A549 (cell line): ENCODE measurements at regions of chr2 and their contacts with region 1.

Region 1: DNA sequence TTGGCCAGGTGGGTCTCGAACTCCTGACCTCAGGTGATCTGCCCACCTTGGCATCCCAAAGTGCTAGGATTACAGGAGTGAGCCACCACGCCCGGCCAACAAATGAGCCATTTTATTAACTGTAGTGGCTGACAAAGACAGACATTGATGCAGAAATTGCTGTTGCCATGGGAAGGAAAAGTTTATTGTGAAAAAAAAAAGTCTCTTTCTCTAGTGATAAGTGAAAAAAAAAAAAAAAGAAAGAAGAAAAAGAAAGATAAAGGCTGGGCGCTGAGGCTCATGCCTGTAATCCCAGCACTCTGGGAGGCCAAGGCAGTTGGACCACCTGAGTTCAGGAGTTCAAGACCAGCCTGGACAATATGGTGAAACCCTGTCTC is 39.8 kb upstream of the RAB1A start:
- DNase-seq: no peak
- ATAC-seq: no peak
- H3K4me3 ChIP-seq: no peak overlapping the region
- H3K27ac ChIP-seq: no peak overlapping the region; a peak in 2 of 6 replicates
- H3K4me1 ChIP-seq: peaks cover 15% of the 10 kb centered on the region; the same call in 2 of the 3 replicates
- CTCF ChIP-seq: no peak
- EP300 ChIP-seq: no peak
- POLR2A ChIP-seq: no peak
- RAD21 ChIP-seq: no peak

Region 2: GRCh38 chr2:65075605-65076344 is 94.0 kb before region 1 on chr2:
- CTCF ChIA-PET with region 1: interaction called, 11 read pairs
- POLR2A ChIA-PET with region 1: no interaction called
- DNase-seq: no peak
- ATAC-seq: peak; percentile 31 to 49; a peak in 4 of 6 replicates
- H3K4me3 ChIP-seq: no peak overlapping the region
- H3K27ac ChIP-seq: no peak overlapping the region
- H3K4me1 ChIP-seq: peaks cover 19% of the 10 kb centered on the region
- CTCF ChIP-seq: no peak
- EP300 ChIP-seq: no peak
- POLR2A ChIP-seq: no peak; the same call in 1 of the 2 replicates
- RAD21 ChIP-seq: no peak

Region 3: GRCh38 chr2:65158557-65158956 is 11.2 kb before region 1 on chr2:
- CTCF ChIA-PET with region 1: interaction called, 10 read pairs
- POLR2A ChIA-PET with region 1: no interaction called
- DNase-seq: no peak
- ATAC-seq: no peak
- H3K4me3 ChIP-seq: no peak overlapping the region
- H3K27ac ChIP-seq: no peak overlapping the region
- H3K4me1 ChIP-seq: peaks cover 14% of the 10 kb centered on the region
- CTCF ChIP-seq: no peak
- EP300 ChIP-seq: no peak
- POLR2A ChIP-seq: no peak
- RAD21 ChIP-seq: no peak

Region 4: DNA sequence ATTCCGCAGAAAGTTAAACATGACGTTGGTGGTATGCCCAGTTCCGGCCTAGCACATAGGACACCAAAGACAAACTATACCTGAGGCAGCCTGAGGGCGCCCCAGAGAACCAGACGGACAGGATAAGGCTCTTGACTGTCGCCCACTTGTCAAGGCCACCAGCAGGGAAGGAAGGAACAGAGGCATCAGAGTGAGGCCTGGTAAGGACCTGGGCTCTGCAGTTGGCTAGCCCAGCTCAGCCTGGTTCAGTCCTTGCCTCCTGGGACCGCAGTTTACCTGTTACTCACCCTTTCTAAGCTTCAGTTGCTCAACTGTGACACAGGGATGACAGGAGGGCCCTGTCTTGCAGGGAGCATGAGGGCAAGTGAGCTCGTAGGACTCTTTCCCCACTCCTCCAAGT is 140.0 kb after region 1 on chr2:
- CTCF ChIA-PET with region 1: no interaction called
- POLR2A ChIA-PET with region 1: no interaction called
- DNase-seq: no peak
- ATAC-seq: peak; percentile 44 to 49; a peak in 4 of 6 replicates
- H3K4me3 ChIP-seq: no peak overlapping the region
- H3K27ac ChIP-seq: no peak overlapping the region
- H3K4me1 ChIP-seq: no peaks in the 10 kb centered on the region
- CTCF ChIP-seq: no peak
- EP300 ChIP-seq: no peak
- POLR2A ChIP-seq: no peak
- RAD21 ChIP-seq: no peak